Activated CD4-positive, alpha-beta T cell treated with anti-CD3 and anti-CD28 coated beads for 36 hours (primary cell): ENCODE measurements at regions of chr4 and their contacts with region 1.

Region 1: GRCh38 chr4:146106556-146106955 is 69.0 kb upstream of the LSM6 start:
- DNase-seq: no peak
- ATAC-seq: no peak
- H3K4me3 Mint-ChIP-seq: no peak overlapping the region
- H3K27ac Mint-ChIP-seq: no peak overlapping the region
- H3K4me1 Mint-ChIP-seq: peaks cover 5% of the 10 kb centered on the region
- H3K27me3 Mint-ChIP-seq: peaks cover 6% of the 10 kb centered on the region

Region 2: DNA sequence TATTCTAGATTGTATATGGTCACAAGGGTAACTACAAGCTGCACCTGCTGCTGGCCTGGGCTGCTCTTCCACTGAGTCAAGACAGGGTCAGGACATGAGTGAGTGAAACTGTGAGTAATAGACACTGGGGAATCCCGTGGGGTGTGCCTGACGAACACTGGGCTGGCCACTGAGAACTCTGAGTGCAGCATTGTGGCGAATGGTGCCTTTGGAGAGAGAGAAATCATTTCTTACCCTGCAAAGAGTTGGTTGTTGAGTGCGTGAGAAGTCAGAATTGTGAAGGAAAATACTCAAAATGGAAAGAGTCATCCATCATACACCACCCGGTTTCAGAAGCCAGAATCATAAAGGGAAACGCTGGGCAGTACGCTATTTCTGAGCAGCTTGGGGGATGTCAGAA is 25.9 kb after region 1 on chr4:
- CTCF ChIA-PET with region 1: no interaction called
- POLR2A ChIA-PET with region 1: no interaction called
- intact Hi-C with region 1: loop called in 1 of 2 experiments (anchors 1 kb)
- DNase-seq: peak; percentile 81
- ATAC-seq: peak; percentile 99
- H3K4me3 Mint-ChIP-seq: no peak overlapping the region
- H3K27ac Mint-ChIP-seq: no peak overlapping the region
- H3K4me1 Mint-ChIP-seq: peaks cover 13% of the 10 kb centered on the region
- H3K27me3 Mint-ChIP-seq: peaks cover 5% of the 10 kb centered on the region

Region 3: GRCh38 chr4:146510942-146511341 is 404.4 kb after region 1 on chr4:
- CTCF ChIA-PET with region 1: no interaction called
- POLR2A ChIA-PET with region 1: no interaction called
- intact Hi-C with region 1: no loop called
- DNase-seq: no peak
- ATAC-seq: no peak
- H3K4me3 Mint-ChIP-seq: no peak overlapping the region
- H3K27ac Mint-ChIP-seq: no peak overlapping the region
- H3K4me1 Mint-ChIP-seq: peaks cover 13% of the 10 kb centered on the region
- H3K27me3 Mint-ChIP-seq: no peaks in the 10 kb centered on the region